Prostate gland (tissue), 2 donors: ENCODE measurements at regions of chrX and their contacts with region 1.

Region 1: GRCh38 chrX:40179318-40179717 is 81.6 kb upstream of the BCOR start:
- DNase-seq: no peak
- H3K4me3 ChIP-seq: no peak overlapping the region
- H3K27ac ChIP-seq: no peak overlapping the region
- H3K4me1 ChIP-seq: no peaks in the 10 kb centered on the region
- H3K27me3 ChIP-seq: no peaks in the 10 kb centered on the region
- CTCF ChIP-seq: no peak
- POLR2A ChIP-seq: no peak

Region 2: DNA sequence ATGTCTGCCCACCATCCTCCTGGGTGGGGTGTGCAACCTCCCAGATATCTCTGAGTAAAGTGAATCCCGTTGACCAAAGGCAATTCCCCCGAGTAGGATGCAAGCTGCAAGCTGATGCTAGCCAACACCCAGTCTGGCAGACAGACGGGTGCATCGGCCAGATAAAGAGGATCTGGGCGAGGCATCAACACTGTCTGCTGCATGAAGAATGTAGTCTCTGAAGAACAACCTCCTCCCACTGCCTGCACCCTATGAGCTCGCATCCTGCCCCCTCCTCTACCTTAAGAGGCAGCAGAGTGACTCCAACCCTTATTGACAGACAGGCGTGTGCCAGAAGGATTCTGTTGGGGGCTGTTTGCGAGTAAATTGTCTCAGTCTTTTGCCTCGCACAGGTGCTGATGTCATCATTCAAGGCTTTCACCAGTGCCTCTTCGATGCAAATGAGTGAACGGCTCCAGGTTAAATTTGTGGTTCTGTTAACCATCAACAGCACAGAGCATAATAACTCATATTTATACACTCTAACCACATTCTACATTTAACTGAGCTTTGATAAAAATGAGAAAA is 628.4 kb before region 1 on chrX:
- intact Hi-C with region 1: no loop called
- DNase-seq: no peak
- H3K4me3 ChIP-seq: no peak overlapping the region
- H3K27ac ChIP-seq: no peak overlapping the region
- H3K4me1 ChIP-seq: no peaks in the 10 kb centered on the region
- H3K27me3 ChIP-seq: no peaks in the 10 kb centered on the region
- CTCF ChIP-seq: no peak
- POLR2A ChIP-seq: no peak

Region 3: DNA sequence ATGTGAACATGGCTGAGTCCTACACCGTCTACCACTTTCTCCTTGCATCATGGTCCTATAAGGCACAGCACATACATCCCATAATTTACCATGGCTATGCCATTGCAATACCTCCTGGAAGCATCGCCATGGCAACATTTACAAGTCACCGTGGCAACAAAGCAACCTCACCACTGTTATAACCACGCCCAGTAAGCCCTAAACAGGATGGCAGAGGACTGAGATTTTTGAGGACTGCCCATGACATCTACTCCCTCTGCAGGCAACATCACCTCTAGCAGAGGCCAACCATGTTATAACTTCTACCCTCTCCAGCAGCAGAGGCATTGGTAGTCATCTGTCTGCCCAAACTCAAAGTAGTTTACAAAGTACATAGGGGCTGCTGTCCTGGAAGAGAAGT is 111.3 kb before region 1 on chrX:
- intact Hi-C with region 1: no loop called
- DNase-seq: no peak
- H3K4me3 ChIP-seq: no peak overlapping the region
- H3K27ac ChIP-seq: no peak overlapping the region
- H3K4me1 ChIP-seq: no peaks in the 10 kb centered on the region
- H3K27me3 ChIP-seq: no peaks in the 10 kb centered on the region
- CTCF ChIP-seq: no peak
- POLR2A ChIP-seq: no peak

Region 4: GRCh38 chrX:40207626-40208025 is 28.3 kb after region 1 on chrX:
- intact Hi-C with region 1: no loop called
- DNase-seq: no peak
- H3K4me3 ChIP-seq: no peak overlapping the region
- H3K27ac ChIP-seq: no peak overlapping the region
- H3K4me1 ChIP-seq: no peaks in the 10 kb centered on the region
- H3K27me3 ChIP-seq: no peaks in the 10 kb centered on the region
- CTCF ChIP-seq: no peak
- POLR2A ChIP-seq: no peak

Region 5: DNA sequence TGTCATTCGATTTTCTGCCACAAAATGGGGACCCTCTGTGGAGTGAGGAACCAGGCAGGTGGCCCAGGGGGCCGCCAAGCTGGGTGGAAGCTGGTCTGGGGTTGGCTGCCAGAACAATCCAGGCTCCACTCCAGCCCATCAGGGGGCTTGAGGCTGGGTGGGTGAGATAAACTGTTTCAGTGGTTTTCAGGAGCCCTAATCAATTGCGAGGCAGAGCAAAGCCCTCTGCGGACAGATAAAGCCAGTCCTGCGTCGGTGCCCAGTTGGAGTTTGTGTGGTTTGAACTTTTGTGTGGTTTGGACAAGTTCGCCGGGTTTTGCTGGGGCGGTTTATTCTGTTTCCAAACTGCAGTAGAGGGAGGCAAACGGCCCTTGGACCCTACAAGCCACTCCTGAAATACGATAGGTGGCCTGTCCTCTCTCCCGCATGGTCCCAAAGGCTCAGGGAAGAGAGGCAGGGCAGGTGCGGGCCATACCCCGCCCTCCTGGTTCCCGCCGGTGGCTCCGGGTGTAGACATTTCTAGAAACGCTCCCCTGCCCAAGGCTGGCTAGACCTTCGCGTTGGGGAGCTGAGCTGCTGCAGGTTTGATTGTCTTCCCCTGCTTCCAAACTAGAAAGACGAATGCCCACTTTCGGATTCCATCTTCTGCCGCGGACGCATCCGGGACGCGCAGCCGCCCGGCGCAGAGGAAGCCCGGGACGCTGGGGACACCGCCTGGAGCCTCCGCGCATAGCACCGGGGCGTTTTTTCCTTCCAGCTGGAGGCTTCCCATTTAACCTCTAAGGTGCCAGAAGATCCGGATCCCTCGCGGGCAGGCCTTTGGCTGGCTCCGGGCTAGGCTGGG is 87.4 kb after region 1 on chrX:
- intact Hi-C with region 1: loop called (anchors 2 kb)
- DNase-seq: peak; percentile 44
- H3K4me3 ChIP-seq: peak overlapping the region; percentile 29 to 35
- H3K27ac ChIP-seq: peak overlapping the region; percentile 69 to 71
- H3K4me1 ChIP-seq: no peaks in the 10 kb centered on the region
- H3K27me3 ChIP-seq: no peaks in the 10 kb centered on the region
- CTCF ChIP-seq: peak; percentile 20 to 69 (median 58)
- POLR2A ChIP-seq: no peak